ENCODE measurements at regions of chr15 and their contacts with region 1.

Region 1: GRCh38 chr15:90954712-90955671 is at the start of gene RCCD1:
- DNase-seq: peak; percentile 98
- H3K4me3 Mint-ChIP-seq: peak within 1 kb of the TSS; percentile 92
- H3K27ac Mint-ChIP-seq: peak within 1 kb of the TSS; percentile 98
- H3K4me1 Mint-ChIP-seq: peaks cover 15% of the 10 kb centered on the region
- H3K27me3 Mint-ChIP-seq: no peaks in the 10 kb centered on the region
- total RNA-seq, gene RCCD1: 28.0 and 32.3 TPM in 2 replicates

Region 2: DNA sequence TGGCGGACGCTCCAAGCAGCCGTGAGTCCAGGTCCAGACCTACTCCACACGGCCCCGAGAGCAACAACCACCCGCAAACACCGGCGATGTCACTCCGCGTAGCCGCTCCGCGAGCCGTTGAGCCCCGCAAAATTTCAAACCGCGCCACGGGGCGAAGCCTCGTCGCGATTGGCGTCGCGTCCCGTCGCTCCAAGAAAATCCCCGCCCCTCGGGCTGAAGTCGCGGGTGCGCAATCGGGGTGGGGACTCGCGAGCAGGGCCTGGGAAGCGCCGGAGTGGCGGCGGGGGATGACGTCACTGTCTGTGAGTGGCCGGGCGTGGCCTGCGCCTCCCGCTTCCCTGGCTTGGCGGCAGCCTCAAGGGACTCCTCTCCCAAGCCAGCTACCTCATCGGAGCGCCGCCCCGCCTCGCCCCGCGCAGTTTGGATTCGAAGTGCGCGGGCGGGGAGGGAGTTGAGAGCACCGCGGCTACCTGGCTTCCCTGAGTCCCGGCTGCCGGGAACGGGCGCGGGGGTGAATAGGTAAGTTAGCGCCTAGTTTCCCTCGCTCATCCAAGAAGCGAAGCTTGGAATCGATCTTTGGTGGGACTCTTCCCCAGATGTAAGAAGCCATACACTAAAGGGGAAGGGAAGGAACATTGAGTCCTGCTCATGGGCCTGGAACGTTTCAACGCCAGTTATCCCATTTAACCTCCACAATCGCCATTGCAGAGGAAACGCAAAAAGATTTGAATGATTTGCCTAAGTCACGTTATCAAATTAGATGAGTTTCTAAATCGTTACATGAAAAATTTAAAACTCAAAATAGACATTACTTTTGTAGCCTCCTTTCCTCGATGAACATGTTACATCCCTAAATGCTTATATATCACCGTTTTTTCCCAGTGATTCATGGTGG is 39.7 kb after region 1 on chr15 and contains the start of gene PRC1:
- intact Hi-C with region 1: loop called (anchors 1 kb)
- DNase-seq: peak; percentile 100
- H3K4me3 Mint-ChIP-seq: peak within 1 kb of the TSS; percentile 100
- H3K27ac Mint-ChIP-seq: peak within 1 kb of the TSS; percentile 100
- H3K4me1 Mint-ChIP-seq: peaks cover 27% of the 10 kb centered on the region
- H3K27me3 Mint-ChIP-seq: no peaks in the 10 kb centered on the region
- total RNA-seq, gene PRC1: 85.0 and 86.2 TPM in 2 replicates

Region 3: DNA sequence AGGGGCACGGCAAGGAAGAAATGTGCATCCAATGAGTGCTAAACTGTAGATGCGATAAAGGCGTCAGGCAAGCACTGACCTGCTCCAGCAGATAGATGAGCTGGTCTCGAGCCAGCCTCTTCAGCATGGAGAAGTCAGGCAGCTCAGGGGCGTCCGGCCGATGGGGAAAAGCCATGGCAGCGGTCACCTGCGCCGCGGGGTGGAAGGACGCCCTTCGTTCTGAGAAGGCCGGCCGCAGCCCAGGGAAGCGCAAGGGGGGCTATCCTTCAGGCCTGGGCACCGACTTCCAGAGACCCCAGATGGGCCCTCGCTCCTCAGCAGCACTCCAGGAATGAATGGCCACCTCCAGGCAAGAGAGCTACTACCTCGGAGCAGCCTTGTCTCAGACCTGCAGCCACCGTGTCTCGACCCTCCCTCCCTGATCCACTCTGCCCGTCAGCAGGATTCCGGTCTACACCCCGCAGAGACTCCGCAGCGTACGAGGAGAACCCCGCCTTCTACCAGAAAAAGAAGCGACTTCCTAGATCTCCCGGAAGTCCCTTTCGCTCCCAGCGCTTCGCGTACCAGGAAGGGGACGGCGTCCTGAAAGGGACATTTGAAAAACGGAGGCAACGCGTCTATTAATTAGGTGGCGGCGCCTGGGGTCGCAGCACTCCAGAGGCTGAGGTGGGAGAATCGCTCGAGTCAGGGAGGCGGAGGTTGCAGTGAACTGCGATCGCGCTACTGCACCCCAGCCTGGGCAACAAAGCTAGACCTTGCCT is 67.3 kb after region 1 on chr15 and contains the start of gene VPS33B:
- intact Hi-C with region 1: loop called (anchors 1 kb)
- DNase-seq: peak; percentile 94
- H3K4me3 Mint-ChIP-seq: peak within 1 kb of the TSS; percentile 88
- H3K27ac Mint-ChIP-seq: peak within 1 kb of the TSS; percentile 77
- H3K4me1 Mint-ChIP-seq: peaks cover 34% of the 10 kb centered on the region
- H3K27me3 Mint-ChIP-seq: no peaks in the 10 kb centered on the region
- total RNA-seq, gene VPS33B: 18.9 and 19.5 TPM in 2 replicates

Region 4: DNA sequence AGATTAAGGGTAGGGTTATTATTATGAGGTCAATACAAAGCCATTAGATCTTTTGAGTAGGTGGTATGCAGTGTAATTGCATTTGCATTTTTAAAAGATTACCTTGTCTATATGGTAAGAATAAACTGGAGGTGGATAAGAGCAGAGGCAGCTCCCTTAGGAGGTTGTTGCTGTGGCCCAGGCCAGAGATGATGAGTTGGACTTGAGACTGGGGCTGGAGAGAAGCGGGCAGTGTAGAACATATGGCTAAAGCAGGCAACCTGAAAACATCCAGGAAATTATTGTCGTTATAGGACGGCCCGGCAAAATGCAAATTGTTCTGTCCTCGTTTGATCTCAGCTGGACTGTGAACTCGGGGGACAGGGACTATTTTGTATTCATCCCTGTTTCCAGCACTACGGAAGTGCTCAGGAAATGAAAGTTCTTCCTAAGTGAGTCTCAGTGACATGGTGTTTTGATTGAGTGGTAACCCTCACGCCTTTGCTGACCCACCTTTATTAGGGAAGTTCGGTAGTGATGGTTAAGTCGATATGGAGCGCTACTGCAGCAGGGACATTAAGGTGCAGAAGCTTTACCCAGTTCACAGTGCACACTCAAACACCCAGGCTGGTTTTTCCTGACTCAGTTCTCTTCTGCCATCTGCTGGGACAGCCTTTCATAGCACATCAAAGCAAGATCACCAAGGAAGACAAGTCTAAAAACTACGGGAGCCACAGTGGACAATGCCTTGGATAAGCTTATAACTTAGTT is 94.6 kb after region 1 on chr15:
- intact Hi-C with region 1: loop called (anchors 1 kb)
- DNase-seq: peak; percentile 91
- H3K4me3 Mint-ChIP-seq: no peak overlapping the region
- H3K27ac Mint-ChIP-seq: no peak overlapping the region
- H3K4me1 Mint-ChIP-seq: peaks cover 24% of the 10 kb centered on the region
- H3K27me3 Mint-ChIP-seq: peaks cover 38% of the 10 kb centered on the region

Region 5: GRCh38 chr15:91271565-91272153 is 316.7 kb after region 1 on chr15:
- intact Hi-C with region 1: loop called (anchors 5 kb)
- DNase-seq: peak; percentile 87
- H3K4me3 Mint-ChIP-seq: peak overlapping the region; percentile 58
- H3K27ac Mint-ChIP-seq: no peak overlapping the region
- H3K4me1 Mint-ChIP-seq: peaks cover 8% of the 10 kb centered on the region
- H3K27me3 Mint-ChIP-seq: peaks cover 43% of the 10 kb centered on the region